ENCODE measurements at regions of chr19 and their contacts with region 1.

Region 1: GRCh38 chr19:17149393-17150135 is 65.6 kb upstream of the USE1 start:
- DNase-seq: no peak
- ATAC-seq: peak; percentile 48 to 66
- H3K4me3 ChIP-seq: no peak overlapping the region
- H3K27ac ChIP-seq: no peak overlapping the region
- H3K4me1 ChIP-seq: peaks cover 5% of the 10 kb centered on the region
- H3K27me3 ChIP-seq: no peaks in the 10 kb centered on the region
- CTCF ChIP-seq: no peak

Region 2: DNA sequence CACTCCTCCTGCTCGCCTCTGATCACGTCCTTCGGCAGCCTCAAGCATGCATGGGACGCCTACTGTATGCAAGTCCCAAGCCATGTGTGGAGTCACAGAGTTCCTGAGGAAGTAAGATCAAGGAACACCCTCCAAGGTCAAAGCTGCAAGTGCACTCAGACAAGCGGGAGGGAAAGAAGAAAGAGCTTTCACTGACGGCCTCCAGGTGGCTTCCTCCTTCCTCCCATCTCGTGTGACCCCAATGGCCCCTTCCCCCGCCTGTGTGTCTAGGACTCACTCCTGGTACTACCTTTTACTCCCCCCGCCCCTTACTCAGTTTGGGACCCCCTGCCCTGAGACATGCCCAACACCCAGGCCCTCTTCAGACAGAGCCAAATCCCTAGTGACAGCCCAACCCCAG is 80.3 kb before region 1 on chr19:
- intact Hi-C with region 1: loop called (anchors 10 kb)
- DNase-seq: no peak
- ATAC-seq: peak in 1 of 2 donors; percentile 16
- H3K4me3 ChIP-seq: no peak overlapping the region
- H3K27ac ChIP-seq: no peak overlapping the region
- H3K4me1 ChIP-seq: peaks cover 17% of the 10 kb centered on the region
- H3K27me3 ChIP-seq: no peaks in the 10 kb centered on the region
- CTCF ChIP-seq: no peak

Measured in lower lobe of right lung (tissue), 2 donors.